Mammary epithelial cell (primary cell): ENCODE measurements at regions of chr9 and their contacts with region 1.

Region 1: DNA sequence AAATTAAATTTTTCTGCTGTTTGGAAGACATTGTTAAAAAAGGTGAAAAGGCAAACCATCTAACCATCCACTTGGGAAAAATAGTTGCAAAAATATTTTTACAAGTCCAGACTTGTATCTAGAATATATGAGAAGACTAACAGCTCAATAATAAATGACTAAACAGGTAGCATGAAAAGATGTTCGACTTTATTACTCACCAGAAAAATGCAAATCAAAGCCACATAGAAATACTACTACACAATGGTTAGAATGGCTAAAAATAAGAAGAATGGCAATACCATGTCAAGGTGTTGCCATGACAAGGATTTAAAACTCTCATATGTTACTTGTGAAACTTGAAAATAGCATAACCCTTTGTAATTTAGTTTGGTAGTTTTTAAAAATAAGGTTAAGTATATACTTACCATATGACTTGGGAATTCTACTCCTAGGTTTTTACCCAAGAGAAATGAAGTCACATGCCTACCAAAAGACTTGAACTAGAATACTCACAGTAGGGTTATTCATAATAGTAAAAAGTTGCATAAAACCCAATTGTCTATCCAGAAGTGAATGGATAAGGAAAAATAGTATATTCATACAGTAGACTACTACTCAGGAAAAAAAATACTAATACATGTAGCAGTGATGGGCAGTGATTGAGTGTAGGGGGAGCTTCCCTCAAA is 93.8 kb downstream of the VPS13A start:
- DNase-seq: peak; percentile 76
- H3K4me3 ChIP-seq: no peak overlapping the region
- H3K27ac ChIP-seq: peak overlapping the region; percentile 31
- H3K4me1 ChIP-seq: peaks cover 9% of the 10 kb centered on the region
- H3K27me3 ChIP-seq: no peaks in the 10 kb centered on the region
- CTCF ChIP-seq: no peak

Region 2: GRCh38 chr9:77183581-77183980 is 87.6 kb before region 1 on chr9:
- CTCF ChIA-PET with region 1: no interaction called
- dilution Hi-C with region 1: no loop called
- in situ Hi-C with region 1: no loop called
- intact Hi-C with region 1: loop called (anchors 10 kb)
- DNase-seq: no peak
- H3K4me3 ChIP-seq: no peak overlapping the region
- H3K27ac ChIP-seq: no peak overlapping the region
- H3K4me1 ChIP-seq: peaks cover 4% of the 10 kb centered on the region
- H3K27me3 ChIP-seq: no peaks in the 10 kb centered on the region
- CTCF ChIP-seq: no peak

Region 3: GRCh38 chr9:77215874-77216273 is 55.3 kb before region 1 on chr9:
- CTCF ChIA-PET with region 1: no interaction called
- dilution Hi-C with region 1: no loop called
- in situ Hi-C with region 1: loop called in 1 of 2 experiments (anchors 10 kb)
- intact Hi-C with region 1: no loop called
- DNase-seq: no peak
- H3K4me3 ChIP-seq: no peak overlapping the region
- H3K27ac ChIP-seq: no peak overlapping the region
- H3K4me1 ChIP-seq: no peaks in the 10 kb centered on the region
- H3K27me3 ChIP-seq: no peaks in the 10 kb centered on the region
- CTCF ChIP-seq: peak in 1 of 2 donors; percentile 33